Colonic mucosa (tissue), 4 donors: ENCODE measurements at regions of chr6 and their contacts with region 1.

Region 1: GRCh38 chr6:151451950-151452749 is at the start of gene RMND1:
- DNase-seq: peak; percentile 100
- H3K4me3 ChIP-seq: peak within 1 kb of the TSS; percentile 88
- H3K27ac ChIP-seq: peak within 1 kb of the TSS; percentile 96
- H3K4me1 ChIP-seq: peaks cover 4% of the 10 kb centered on the region
- H3K27me3 ChIP-seq: no peaks in the 10 kb centered on the region
- CTCF ChIP-seq: no peak
- total RNA-seq, gene RMND1: 20.3 to 20.4 TPM

Region 2: GRCh38 chr6:151390276-151391032 is 61.7 kb before region 1 on chr6:
- intact Hi-C with region 1: loop called (anchors 5 kb)
- DNase-seq: peak; percentile 96
- H3K4me3 ChIP-seq: peak overlapping the region; percentile 74
- H3K27ac ChIP-seq: peak overlapping the region; percentile 98
- H3K4me1 ChIP-seq: peaks cover 6% of the 10 kb centered on the region
- H3K27me3 ChIP-seq: no peaks in the 10 kb centered on the region
- CTCF ChIP-seq: no peak

Region 3: GRCh38 chr6:151488226-151488625 is 36.1 kb after region 1 on chr6:
- intact Hi-C with region 1: no loop called
- DNase-seq: no peak
- H3K4me3 ChIP-seq: no peak overlapping the region
- H3K27ac ChIP-seq: no peak overlapping the region
- H3K4me1 ChIP-seq: no peaks in the 10 kb centered on the region
- H3K27me3 ChIP-seq: no peaks in the 10 kb centered on the region
- CTCF ChIP-seq: no peak